OCI-LY7 (cell line): ENCODE measurements at regions of chr17 and their contacts with region 1.

Region 1: DNA sequence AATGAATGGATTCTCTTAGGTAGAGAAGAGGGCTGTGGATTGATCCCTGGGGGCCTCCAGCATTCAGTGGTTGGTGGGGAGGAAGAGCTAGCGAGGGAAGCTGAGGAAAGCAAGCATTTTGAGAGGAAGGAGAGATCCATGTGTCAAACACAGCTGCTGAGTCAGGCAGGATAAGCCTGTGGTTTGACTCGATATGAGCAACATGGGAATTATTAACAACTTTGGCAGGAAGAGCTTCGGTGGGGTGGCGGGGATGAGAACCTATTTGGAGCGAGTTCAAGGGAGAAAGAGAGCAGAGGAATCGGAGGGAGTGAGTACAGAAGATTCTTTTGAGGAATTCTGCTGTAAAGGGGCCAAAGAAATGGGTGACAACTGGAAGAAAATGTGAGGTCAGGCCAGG is 59.5 kb upstream of the CDC42EP4 start:
- DNase-seq: no peak
- H3K4me3 ChIP-seq: no peak overlapping the region
- H3K27ac ChIP-seq: no peak overlapping the region
- H3K4me1 ChIP-seq: no peaks in the 10 kb centered on the region
- CTCF ChIP-seq: no peak

Region 2: DNA sequence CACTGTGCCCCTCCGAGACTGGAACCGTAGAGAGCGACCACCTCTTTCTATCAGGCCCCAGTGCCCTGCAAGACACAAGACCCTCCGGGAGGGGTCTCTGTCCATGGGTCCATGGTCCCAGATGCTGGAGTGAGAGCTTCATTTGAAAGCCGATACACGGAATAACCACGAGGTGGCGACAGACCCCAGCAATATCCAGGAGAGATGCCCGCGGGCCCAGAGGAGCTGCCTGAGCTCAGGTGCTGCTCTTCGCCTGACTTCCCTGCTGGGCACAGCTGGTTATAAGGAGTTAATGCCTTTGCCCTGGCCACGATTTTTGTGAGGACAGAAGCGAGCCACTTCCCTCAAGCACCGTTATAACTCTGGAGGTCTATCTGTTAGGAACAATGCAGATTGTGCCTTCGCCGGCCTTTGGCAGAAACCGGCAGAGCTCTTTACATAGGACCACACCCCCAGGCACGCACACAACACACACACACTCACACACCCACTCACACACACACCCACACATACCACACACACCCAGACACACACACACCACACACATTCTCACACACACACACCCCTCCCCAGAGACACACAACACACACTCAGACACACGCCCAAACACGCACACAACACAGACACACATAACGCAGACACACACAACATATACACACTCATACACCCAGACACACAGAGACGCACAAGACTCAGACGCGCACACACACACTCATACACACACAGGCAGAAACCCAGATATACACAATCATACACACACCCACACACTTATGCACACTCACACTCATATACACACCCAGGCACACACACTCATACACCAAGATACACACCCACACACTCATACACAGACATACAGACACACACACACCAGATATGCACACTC is 814.1 kb before region 1 on chr17:
- CTCF ChIA-PET with region 1: interaction called, 5 read pairs
- POLR2A ChIA-PET with region 1: no interaction called
- intact Hi-C with region 1: loop called (anchors 1 kb)
- DNase-seq: peak; percentile 74
- H3K4me3 ChIP-seq: no peak overlapping the region
- H3K27ac ChIP-seq: no peak overlapping the region
- H3K4me1 ChIP-seq: no peaks in the 10 kb centered on the region
- CTCF ChIP-seq: peak; percentile 97

Region 3: GRCh38 chr17:73474370-73474988 is 103.2 kb after region 1 on chr17:
- CTCF ChIA-PET with region 1: no interaction called
- POLR2A ChIA-PET with region 1: no interaction called
- intact Hi-C with region 1: no loop called
- DNase-seq: no peak
- H3K4me3 ChIP-seq: no peak overlapping the region
- H3K27ac ChIP-seq: no peak overlapping the region
- H3K4me1 ChIP-seq: no peaks in the 10 kb centered on the region
- CTCF ChIP-seq: no peak